Activated T-helper 2 cell treated with anti-CD3 and anti-CD28 coated beads, Interferon-gamma antibody, Interleukin-2, Interleukin-4, amounts not matched to agents 10 μg/mL and 5 μg/mL and 100 μg/mL, durations not matched to agents 14 hours and 24 hours and 36 hours (primary cell): ENCODE measurements at regions of chr1 and their contacts with region 1.

Region 1: GRCh38 chr1:221794079-221794670 is 52.3 kb upstream of the DUSP10 start:
- DNase-seq: no peak
- H3K4me3 Mint-ChIP-seq: peak overlapping the region; percentile 48
- H3K27ac Mint-ChIP-seq: peak overlapping the region; percentile 92
- H3K4me1 Mint-ChIP-seq: peaks cover 36% of the 10 kb centered on the region
- H3K27me3 Mint-ChIP-seq: no peaks in the 10 kb centered on the region

Region 2: GRCh38 chr1:221753828-221754188 is 40.4 kb before region 1 on chr1:
- intact Hi-C with region 1: loop called (anchors 1 kb)
- DNase-seq: no peak
- H3K4me3 Mint-ChIP-seq: peak overlapping the region; percentile 28
- H3K27ac Mint-ChIP-seq: peak overlapping the region; percentile 81
- H3K4me1 Mint-ChIP-seq: peaks cover 50% of the 10 kb centered on the region
- H3K27me3 Mint-ChIP-seq: no peaks in the 10 kb centered on the region

Region 3: GRCh38 chr1:221824025-221824424 is 29.9 kb after region 1 on chr1:
- intact Hi-C with region 1: loop called (anchors 1 kb)
- DNase-seq: no peak
- H3K4me3 Mint-ChIP-seq: no peak overlapping the region
- H3K27ac Mint-ChIP-seq: no peak overlapping the region
- H3K4me1 Mint-ChIP-seq: peaks cover 52% of the 10 kb centered on the region
- H3K27me3 Mint-ChIP-seq: peaks cover 4% of the 10 kb centered on the region

Region 4: DNA sequence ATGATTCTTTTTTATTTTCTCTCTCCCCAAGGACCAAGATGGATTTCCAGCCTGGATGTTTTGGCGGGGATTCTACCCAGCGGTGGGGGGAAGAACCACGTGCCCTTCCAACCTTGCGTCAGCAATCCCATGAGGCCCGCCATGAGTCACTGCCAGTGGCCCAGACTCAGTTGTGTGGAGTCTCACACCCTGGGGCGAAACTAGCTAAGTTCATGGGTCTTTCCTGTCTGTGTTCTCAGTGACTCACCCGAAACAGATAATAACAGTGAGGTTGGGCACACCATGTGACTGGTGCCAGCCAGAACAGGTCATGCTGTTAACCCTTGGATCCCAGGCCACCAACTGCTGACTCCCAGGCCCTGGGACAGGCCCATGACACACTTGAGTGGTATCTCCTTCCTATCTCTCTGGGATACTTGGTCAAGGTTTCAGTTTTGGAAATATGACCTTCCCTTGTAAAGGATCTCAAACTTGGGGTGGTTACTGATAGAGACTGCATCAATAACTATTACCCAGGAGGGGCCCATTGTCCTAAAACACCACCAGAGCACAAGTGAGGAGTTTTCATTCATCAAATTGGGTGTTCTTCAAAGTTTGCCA is 45.7 kb after region 1 on chr1:
- intact Hi-C with region 1: loop called (anchors 1 kb)
- DNase-seq: peak; percentile 33
- H3K4me3 Mint-ChIP-seq: no peak overlapping the region
- H3K27ac Mint-ChIP-seq: peak overlapping the region; percentile 60
- H3K4me1 Mint-ChIP-seq: peaks cover 48% of the 10 kb centered on the region
- H3K27me3 Mint-ChIP-seq: peaks cover 4% of the 10 kb centered on the region

Region 5: GRCh38 chr1:221850471-221851187 is 56.5 kb after region 1 on chr1:
- intact Hi-C with region 1: no loop called
- DNase-seq: no peak
- H3K4me3 Mint-ChIP-seq: no peak overlapping the region
- H3K27ac Mint-ChIP-seq: no peak overlapping the region
- H3K4me1 Mint-ChIP-seq: peaks cover 8% of the 10 kb centered on the region
- H3K27me3 Mint-ChIP-seq: peaks cover 3% of the 10 kb centered on the region